Ovary (tissue), 10 donors: ENCODE measurements at regions of chr16 and their contacts with region 1.

Region 1: GRCh38 chr16:26102369-26102768 is 410.6 kb downstream of the HS3ST4 start:
- DNase-seq: no peak
- H3K4me3 ChIP-seq: no peak overlapping the region
- H3K27ac ChIP-seq: no peak overlapping the region
- H3K4me1 ChIP-seq: no peaks in the 10 kb centered on the region
- H3K27me3 ChIP-seq: no peaks in the 10 kb centered on the region
- CTCF ChIP-seq: no peak
- EP300 ChIP-seq: no peak
- POLR2A ChIP-seq: no peak

Region 2: DNA sequence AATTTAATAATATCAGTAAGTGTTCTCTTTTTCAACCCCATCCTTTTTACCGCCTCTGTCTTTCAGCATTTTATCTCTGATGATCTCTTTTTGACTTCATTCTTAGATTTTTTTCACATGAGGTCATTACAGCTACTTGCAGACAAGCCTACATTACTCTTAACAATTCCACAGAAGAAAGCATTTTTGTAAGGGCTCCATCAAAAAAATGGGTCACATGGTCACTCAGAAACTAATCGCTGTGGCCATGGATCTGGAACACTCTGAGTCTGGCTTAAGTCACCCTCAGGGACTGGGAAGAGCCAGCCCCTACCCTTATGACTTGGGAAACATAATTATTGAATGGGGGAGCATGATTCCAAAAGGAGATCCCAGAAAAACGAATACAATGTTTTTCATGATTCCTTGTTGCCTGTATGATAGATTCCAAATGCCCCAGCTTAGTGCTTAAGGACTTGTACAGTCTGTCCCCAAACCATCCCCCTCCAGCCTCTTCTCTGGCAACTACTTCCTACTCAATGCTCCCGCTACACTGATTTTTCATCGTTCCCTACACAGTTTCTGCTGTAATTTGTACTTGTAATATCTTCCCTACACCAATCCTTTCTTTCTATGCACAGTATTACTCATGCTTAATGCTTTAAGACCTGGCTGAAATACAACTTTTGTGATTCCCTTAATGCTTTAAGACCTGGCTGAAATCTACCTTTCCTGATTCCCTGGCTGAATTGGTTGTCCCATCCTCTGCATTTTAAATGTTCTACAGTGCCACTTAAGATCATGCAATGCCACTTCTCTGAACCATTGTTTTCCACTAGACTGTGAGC is 47.2 kb after region 1 on chr16:
- intact Hi-C with region 1: loop called in 1 of 4 experiments (anchors 10 kb)
- DNase-seq: no peak
- H3K4me3 ChIP-seq: no peak overlapping the region
- H3K27ac ChIP-seq: no peak overlapping the region
- H3K4me1 ChIP-seq: no peaks in the 10 kb centered on the region
- H3K27me3 ChIP-seq: no peaks in the 10 kb centered on the region
- CTCF ChIP-seq: no peak
- EP300 ChIP-seq: no peak
- POLR2A ChIP-seq: no peak

Region 3: GRCh38 chr16:26765087-26765486 is 662.7 kb after region 1 on chr16:
- intact Hi-C with region 1: loop called in 1 of 4 experiments (anchors 5 kb)
- DNase-seq: no peak
- H3K4me3 ChIP-seq: no peak overlapping the region
- H3K27ac ChIP-seq: no peak overlapping the region
- H3K4me1 ChIP-seq: no peaks in the 10 kb centered on the region
- H3K27me3 ChIP-seq: no peaks in the 10 kb centered on the region
- CTCF ChIP-seq: no peak
- EP300 ChIP-seq: no peak
- POLR2A ChIP-seq: no peak